ENCODE measurements at regions of chr10 and their contacts with region 1.

Region 1: DNA sequence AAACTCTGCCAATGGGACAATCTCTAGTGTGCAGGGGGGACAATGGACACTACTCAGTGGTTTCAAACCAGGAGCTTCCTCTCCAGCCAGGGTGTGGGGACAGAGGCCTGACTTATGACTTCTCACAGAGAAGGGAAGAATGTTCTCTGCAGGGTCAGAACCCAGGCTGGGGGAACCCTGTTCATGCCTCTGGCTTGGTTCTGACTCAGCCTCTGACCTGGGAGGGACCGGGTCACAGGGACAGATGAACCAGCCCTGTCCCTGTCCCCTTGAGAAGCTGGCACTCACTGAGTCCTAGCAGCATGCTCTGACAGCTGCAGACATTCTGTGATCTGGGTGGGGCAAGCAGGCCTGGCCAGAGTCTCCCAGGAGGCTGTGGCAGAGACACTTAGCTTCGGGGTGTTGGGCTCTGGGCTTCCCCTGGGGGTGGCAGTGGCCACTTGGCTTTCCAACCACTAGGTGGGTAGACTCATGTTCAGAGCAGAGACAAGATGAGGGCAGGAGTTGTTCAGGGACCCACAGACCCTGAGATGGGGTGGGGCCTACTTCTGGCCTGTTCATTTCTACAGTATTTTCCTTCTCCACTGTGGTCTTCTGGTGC is 13.6 kb downstream of the TSPAN15 start:
- DNase-seq: no peak
- H3K4me3 ChIP-seq: no peak overlapping the region
- H3K27ac ChIP-seq: peak overlapping the region; percentile 45
- H3K4me1 ChIP-seq: peaks cover 51% of the 10 kb centered on the region
- H3K27me3 ChIP-seq: no peaks in the 10 kb centered on the region
- CTCF ChIP-seq: no peak
- POLR2A ChIP-seq: no peak

Region 2: GRCh38 chr10:69425511-69426298 is 39.2 kb before region 1 on chr10:
- CTCF ChIA-PET with region 1: no interaction called
- POLR2A ChIA-PET with region 1: no interaction called
- dilution Hi-C with region 1: no loop called
- intact Hi-C with region 1: loop called (anchors 5 kb)
- DNase-seq: no peak
- H3K4me3 ChIP-seq: no peak overlapping the region
- H3K27ac ChIP-seq: no peak overlapping the region
- H3K4me1 ChIP-seq: no peaks in the 10 kb centered on the region
- H3K27me3 ChIP-seq: peaks cover 0 to 1% of the 10 kb centered on the region in 2 experiments
- CTCF ChIP-seq: no peak
- POLR2A ChIP-seq: no peak

Region 3: GRCh38 chr10:69479240-69480067 is 14.6 kb after region 1 on chr10:
- CTCF ChIA-PET with region 1: interaction called, 9 read pairs
- POLR2A ChIA-PET with region 1: no interaction called
- dilution Hi-C with region 1: no loop called
- intact Hi-C with region 1: loop called (anchors 1 kb)
- DNase-seq: peak; percentile 57
- H3K4me3 ChIP-seq: no peak overlapping the region
- H3K27ac ChIP-seq: peak overlapping the region; percentile 47
- H3K4me1 ChIP-seq: peaks cover 52% of the 10 kb centered on the region
- H3K27me3 ChIP-seq: no peaks in the 10 kb centered on the region
- CTCF ChIP-seq: no peak
- POLR2A ChIP-seq: no peak